Activated T-helper 1 cell treated with anti-CD3 and anti-CD28 coated beads, Interleukin-12 subunit alpha, Interleukin-12 subunit beta, Interleukin-2, Interleukin-4 antibody, amounts not matched to agents 30 ng/mL and 10 ng/mL and 1 ng/mL, durations not matched to agents 14 hours and 24 hours and 36 hours (primary cell): ENCODE measurements at regions of chr2 and their contacts with region 1.

Region 1: DNA sequence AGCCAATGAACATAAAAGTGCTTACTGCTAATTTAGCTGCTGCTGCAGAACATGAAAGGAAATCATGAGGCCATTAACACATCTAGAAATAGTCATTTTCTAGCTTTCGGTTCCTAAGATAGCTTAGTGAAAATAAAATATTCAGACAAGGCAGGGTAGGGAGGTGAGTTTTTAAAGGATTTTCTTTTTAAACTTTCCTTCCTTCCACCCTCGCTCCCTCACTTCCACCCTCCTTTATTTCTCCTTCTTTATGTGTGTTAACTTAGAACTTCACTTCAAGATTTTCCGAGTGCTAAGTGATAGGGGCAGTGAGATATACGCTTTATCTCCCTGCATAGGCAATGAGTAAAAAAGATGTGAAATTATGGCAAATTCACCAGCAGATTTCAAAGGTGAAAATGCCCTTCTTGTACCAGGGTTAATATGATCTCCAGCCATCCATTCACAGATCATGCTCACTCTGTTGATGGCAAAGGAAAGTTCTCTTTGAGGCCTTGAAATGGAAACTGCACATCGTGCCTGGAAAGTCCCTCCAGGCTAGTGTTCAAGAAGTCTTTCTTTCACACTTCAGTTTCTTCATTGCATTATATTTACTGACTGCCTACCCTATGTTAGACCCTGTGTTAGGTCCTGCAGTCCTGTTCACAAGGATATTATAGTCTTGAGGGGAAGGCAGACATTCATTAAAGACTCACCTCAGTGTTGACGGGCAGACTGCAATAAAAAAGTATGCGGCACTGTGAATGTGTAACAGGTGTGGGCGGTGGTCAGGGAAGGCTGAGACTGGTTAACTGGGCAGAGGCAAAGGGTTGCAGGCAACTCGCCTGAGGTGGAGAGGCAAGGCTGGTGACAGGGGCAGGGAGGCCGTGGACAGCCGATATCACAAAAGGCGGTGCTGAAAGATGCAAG is 200.8 kb downstream of the PLCL1 start:
- DNase-seq: peak; percentile 30
- H3K4me3 Mint-ChIP-seq: peak overlapping the region; percentile 46
- H3K27ac Mint-ChIP-seq: peak overlapping the region; percentile 76
- H3K4me1 Mint-ChIP-seq: peaks cover 50% of the 10 kb centered on the region
- H3K27me3 Mint-ChIP-seq: no peaks in the 10 kb centered on the region

Region 2: DNA sequence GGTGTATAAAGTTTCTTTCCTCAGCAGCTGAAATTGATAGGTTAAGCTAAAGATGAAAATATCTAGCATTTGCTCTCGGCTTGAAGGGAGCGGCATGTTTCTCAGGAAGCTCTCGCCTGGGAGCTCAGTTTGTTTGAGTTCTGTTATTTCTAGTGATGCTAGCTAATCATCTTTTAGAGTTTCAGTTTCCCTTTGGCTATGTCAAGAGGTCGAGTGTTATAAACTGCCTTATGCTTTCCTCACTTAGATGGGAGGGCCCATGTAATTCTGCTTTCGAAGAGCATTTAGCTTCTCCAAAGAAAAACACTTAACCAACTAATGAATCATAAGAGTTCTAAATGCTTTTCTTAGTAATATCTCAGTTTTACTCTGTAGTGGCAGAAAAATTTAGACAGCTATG is 167.1 kb before region 1 on chr2:
- intact Hi-C with region 1: loop called (anchors 1 kb)
- DNase-seq: peak; percentile 11
- H3K4me3 Mint-ChIP-seq: peak overlapping the region; percentile 54
- H3K27ac Mint-ChIP-seq: peak overlapping the region; percentile 76
- H3K4me1 Mint-ChIP-seq: peaks cover 42% of the 10 kb centered on the region
- H3K27me3 Mint-ChIP-seq: peaks cover 3% of the 10 kb centered on the region

Region 3: DNA sequence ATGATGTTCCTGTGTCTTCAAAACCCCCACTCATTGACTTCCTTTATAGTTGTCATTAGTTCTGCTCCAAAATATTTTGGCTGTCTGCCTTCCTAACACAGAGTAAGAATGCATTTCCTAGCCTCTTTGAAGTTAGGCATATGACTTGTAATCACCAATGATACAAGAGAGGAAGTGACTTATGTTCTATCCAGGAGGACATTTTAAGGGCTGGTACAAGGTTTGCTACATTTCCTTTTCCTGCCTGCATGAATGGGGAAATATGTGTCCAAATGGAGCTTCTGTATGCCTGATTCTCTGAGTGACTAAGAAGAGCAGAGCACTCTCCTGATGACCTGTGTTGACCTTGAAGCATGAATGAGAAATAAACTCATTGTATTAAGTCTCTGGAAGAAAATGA is 85.7 kb before region 1 on chr2:
- intact Hi-C with region 1: no loop called
- DNase-seq: no peak
- H3K4me3 Mint-ChIP-seq: no peak overlapping the region
- H3K27ac Mint-ChIP-seq: no peak overlapping the region
- H3K4me1 Mint-ChIP-seq: no peaks in the 10 kb centered on the region
- H3K27me3 Mint-ChIP-seq: peaks cover 5% of the 10 kb centered on the region

Region 4: DNA sequence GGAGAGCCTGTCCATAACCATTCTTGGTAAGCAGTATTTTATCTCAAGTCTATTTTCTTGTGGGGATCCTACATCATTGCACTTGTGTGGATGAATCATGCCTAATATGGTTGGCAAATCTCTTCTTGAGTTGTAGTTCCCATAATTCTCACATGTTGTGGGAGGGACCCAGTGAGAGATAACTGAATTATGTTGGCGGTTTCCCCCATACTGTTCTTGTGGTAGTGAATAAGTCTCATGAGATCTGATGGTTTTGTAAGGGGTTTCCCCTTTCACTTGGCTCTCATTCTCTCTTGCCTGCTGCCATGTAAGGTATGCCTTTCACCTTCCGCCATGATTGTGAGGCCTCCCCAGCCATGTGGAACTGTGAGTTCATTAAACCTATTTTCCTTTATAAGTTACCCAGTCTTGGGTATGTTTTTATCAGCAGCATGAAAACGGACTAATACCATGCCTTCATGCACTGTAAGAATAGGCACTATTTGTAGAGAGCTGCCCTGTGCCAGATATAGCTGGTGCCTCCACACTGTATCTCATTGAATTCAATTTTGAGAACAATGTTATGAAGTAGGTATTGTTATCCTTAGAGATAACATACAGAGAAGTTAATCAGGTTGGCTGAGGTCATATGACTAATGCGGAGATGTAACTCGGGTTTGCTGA is 52.5 kb before region 1 on chr2:
- intact Hi-C with region 1: loop called (anchors 1 kb)
- DNase-seq: no peak
- H3K4me3 Mint-ChIP-seq: no peak overlapping the region
- H3K27ac Mint-ChIP-seq: no peak overlapping the region
- H3K4me1 Mint-ChIP-seq: peaks cover 9% of the 10 kb centered on the region
- H3K27me3 Mint-ChIP-seq: no peaks in the 10 kb centered on the region

Region 5: GRCh38 chr2:198016243-198016642 is 11.1 kb after region 1 on chr2:
- intact Hi-C with region 1: loop called (anchors 2 kb)
- DNase-seq: no peak
- H3K4me3 Mint-ChIP-seq: peak overlapping the region; percentile 27
- H3K27ac Mint-ChIP-seq: peak overlapping the region; percentile 64
- H3K4me1 Mint-ChIP-seq: peaks cover 28% of the 10 kb centered on the region
- H3K27me3 Mint-ChIP-seq: no peaks in the 10 kb centered on the region

Region 6: DNA sequence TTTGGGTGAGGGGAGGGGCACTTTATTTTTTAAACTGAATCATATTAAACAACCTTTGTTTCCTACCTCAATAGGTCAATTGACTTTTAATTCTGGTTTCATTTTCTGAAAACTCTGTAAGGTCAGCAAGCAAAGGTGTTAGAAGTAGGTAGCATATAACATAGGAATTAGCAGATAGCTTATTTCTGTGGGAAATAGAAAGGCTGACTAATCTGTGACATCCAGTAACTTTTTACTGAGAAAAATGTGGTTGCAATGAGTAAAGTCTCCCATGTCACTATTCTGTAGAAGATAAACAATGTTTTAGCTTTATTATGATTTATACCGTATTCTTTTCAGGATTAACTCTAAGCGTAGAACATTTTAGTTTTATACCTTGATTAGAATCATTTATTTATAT is 39.6 kb after region 1 on chr2:
- intact Hi-C with region 1: loop called (anchors 1 kb)
- DNase-seq: no peak
- H3K4me3 Mint-ChIP-seq: peak overlapping the region; percentile 19
- H3K27ac Mint-ChIP-seq: peak overlapping the region; percentile 76
- H3K4me1 Mint-ChIP-seq: peaks cover 14% of the 10 kb centered on the region
- H3K27me3 Mint-ChIP-seq: no peaks in the 10 kb centered on the region